ENCODE measurements at regions of chr2 and their contacts with region 1.

Region 1: DNA sequence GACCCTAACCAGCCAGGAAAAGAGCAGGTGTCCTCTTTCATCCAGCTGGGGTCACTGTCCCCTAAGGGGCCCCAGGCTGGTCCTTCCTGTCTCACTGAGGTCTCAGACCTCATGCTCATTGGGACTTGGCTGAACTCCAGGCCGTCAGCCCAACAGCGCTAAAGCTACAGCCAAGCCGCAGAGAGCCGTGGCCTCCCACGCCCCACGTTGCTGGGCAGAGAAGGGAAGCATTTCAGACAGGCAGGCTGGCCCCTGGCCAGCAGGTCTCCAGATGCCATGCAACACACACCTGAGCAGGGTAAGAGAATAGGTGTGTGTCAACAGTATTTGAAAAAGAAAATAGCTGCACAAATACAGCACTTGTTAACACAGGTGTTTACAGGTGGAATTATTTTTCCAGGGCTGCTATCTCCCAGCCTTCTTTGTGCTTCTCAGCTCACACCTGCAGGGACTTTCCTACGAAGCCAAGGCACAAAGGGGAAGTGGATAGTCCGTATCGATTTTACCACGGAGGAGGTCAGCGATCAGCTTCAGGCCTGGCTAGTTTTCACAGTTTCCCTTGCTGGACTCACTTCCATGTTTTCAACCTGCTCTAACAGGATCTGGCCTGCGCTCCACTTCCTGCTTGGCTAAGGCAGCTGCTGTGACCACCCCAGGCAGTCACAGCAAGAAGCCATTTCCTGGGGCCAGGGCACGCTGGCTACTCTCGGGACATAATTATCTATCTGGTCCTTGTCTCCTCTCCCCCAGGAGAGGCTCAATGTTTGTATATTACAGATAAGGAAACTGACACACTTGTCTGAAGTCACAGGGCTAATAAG is 156.1 kb upstream of the ID2 start:
- DNase-seq: peak; percentile 90
- ATAC-seq: peak; percentile 82
- H3K4me3 ChIP-seq: 0 out of 2 replicates have a peak overlapping the region, but pooled peaks have one; percentile 9
- H3K27ac ChIP-seq: peak overlapping the region; percentile 74
- H3K4me1 ChIP-seq: peaks cover 64% of the 10 kb centered on the region
- H3K27me3 ChIP-seq: no peaks in the 10 kb centered on the region
- CTCF ChIP-seq: peak; percentile 54 to 72 (median 58)
- EP300 ChIP-seq: peak in 1 of 2 experiments; percentile 80; a peak in 3 of 4 replicates
- POLR2A ChIP-seq: no peak
- RAD21 ChIP-seq: peak; percentile 88

Region 2: DNA sequence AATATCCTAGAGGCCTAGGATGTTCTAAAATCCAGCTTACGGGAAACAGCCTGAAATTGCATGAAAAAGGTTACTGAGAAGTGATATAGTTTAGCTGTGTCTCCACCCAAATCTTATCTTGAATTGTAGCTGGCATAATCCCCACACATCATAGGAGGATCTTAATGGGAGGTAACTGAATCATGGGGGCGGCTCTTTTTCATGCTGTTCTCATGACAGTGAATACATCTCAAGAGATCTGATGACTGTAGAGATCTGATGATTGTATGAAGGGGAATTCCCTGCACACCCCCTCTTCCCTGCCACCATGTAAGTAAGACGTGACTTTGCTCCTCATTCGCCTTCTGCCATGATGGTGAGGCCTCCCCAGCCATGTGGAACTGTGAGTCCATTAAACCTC is 229.5 kb before region 1 on chr2:
- CTCF ChIA-PET with region 1: no interaction called
- POLR2A ChIA-PET with region 1: no interaction called
- RAD21 ChIA-PET with region 1: no interaction called
- SMC1A ChIA-PET with region 1: no interaction called
- in situ Hi-C with region 1: no loop called
- intact Hi-C with region 1: no loop called
- DNase-seq: no peak
- ATAC-seq: no peak
- H3K4me3 ChIP-seq: no peak overlapping the region
- H3K27ac ChIP-seq: no peak overlapping the region
- H3K4me1 ChIP-seq: peaks cover 16% of the 10 kb centered on the region
- H3K27me3 ChIP-seq: no peaks in the 10 kb centered on the region
- CTCF ChIP-seq: no peak
- EP300 ChIP-seq: no peak
- POLR2A ChIP-seq: no peak
- RAD21 ChIP-seq: no peak

Region 3: DNA sequence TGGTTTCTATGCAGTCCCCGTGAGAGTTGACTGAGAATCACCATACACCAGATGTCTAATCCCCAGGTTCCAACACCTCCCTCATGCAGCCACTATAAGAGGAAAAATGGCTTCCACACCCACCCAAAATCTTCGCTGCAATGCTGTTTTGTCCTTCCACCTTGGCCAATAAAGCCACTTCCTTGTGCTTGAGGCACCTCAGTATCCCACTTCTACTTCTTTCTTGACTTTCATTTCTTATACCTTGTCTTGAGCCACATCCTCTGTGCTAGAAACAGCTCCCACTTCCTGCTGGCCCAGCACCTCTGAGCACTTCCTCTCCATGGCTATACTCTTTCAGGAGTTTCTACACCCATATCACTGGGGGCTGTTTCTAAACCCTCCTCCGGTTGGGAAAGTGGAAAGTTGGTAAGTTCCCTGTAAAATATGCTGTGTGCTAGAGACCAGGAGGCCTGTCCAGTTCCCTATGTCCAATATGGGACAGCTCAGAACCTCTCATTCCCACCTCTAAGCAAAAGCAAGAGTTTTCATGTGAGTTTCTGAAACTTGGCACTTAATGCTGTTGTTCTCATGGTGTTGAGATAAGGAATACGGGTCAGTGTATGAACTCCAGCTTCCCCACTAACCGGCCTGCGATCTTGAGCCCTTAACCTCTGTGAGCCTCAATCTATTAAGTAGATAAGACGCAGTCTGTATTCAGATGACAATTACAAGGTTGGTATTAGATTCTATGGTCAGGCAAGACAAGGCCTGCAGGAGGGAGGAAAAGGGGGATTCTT is 53.1 kb before region 1 on chr2:
- CTCF ChIA-PET with region 1: interaction called, 7 read pairs
- POLR2A ChIA-PET with region 1: interaction called, 73 read pairs
- RAD21 ChIA-PET with region 1: interaction called, 49 read pairs
- SMC1A ChIA-PET with region 1: interaction called, 34 read pairs
- in situ Hi-C with region 1: no loop called
- intact Hi-C with region 1: no loop called
- DNase-seq: no peak
- ATAC-seq: peak; percentile 20
- H3K4me3 ChIP-seq: no peak overlapping the region
- H3K27ac ChIP-seq: peak overlapping the region; percentile 33
- H3K4me1 ChIP-seq: peaks cover 59% of the 10 kb centered on the region
- H3K27me3 ChIP-seq: no peaks in the 10 kb centered on the region
- CTCF ChIP-seq: no peak
- EP300 ChIP-seq: peak; percentile 10 to 24; a peak in 1 of 4 replicates
- POLR2A ChIP-seq: no peak
- RAD21 ChIP-seq: no peak

Region 4: GRCh38 chr2:8514796-8515758 is 10.7 kb before region 1 on chr2:
- CTCF ChIA-PET with region 1: interaction called, 7 read pairs
- POLR2A ChIA-PET with region 1: interaction called, 26 read pairs
- RAD21 ChIA-PET with region 1: interaction called, 18 read pairs
- SMC1A ChIA-PET with region 1: interaction called, 34 read pairs
- in situ Hi-C with region 1: no loop called
- intact Hi-C with region 1: no loop called
- DNase-seq: peak; percentile 99
- ATAC-seq: peak; percentile 82
- H3K4me3 ChIP-seq: peak overlapping the region; percentile 51; the same call in 1 of the 2 replicates
- H3K27ac ChIP-seq: peak overlapping the region; percentile 93
- H3K4me1 ChIP-seq: peaks cover 46% of the 10 kb centered on the region
- H3K27me3 ChIP-seq: no peaks in the 10 kb centered on the region
- CTCF ChIP-seq: no peak
- EP300 ChIP-seq: peak; percentile 76 to 95; a peak in 3 of 4 replicates
- POLR2A ChIP-seq: no peak
- RAD21 ChIP-seq: peak; percentile 36; the same call in 1 of the 2 replicates

Region 5: GRCh38 chr2:8574144-8575037 is 48.6 kb after region 1 on chr2:
- CTCF ChIA-PET with region 1: interaction called, 5 read pairs
- POLR2A ChIA-PET with region 1: interaction called, 9 read pairs
- RAD21 ChIA-PET with region 1: interaction called, 25 read pairs
- SMC1A ChIA-PET with region 1: interaction called, 21 read pairs
- in situ Hi-C with region 1: no loop called
- intact Hi-C with region 1: loop called (anchors 5 kb)
- DNase-seq: no peak
- ATAC-seq: peak; percentile 77
- H3K4me3 ChIP-seq: peak overlapping the region; percentile 52; the same call in 1 of the 2 replicates
- H3K27ac ChIP-seq: peak overlapping the region; percentile 51
- H3K4me1 ChIP-seq: peaks cover 46% of the 10 kb centered on the region
- H3K27me3 ChIP-seq: no peaks in the 10 kb centered on the region
- CTCF ChIP-seq: 0 out of 6 replicates have a peak, but pooled peaks of 1 of the 3 experiments have one; percentile 9
- EP300 ChIP-seq: no peak
- POLR2A ChIP-seq: no peak
- RAD21 ChIP-seq: 0 out of 2 replicates have a peak, but pooled peaks have one; percentile 12

Region 6: DNA sequence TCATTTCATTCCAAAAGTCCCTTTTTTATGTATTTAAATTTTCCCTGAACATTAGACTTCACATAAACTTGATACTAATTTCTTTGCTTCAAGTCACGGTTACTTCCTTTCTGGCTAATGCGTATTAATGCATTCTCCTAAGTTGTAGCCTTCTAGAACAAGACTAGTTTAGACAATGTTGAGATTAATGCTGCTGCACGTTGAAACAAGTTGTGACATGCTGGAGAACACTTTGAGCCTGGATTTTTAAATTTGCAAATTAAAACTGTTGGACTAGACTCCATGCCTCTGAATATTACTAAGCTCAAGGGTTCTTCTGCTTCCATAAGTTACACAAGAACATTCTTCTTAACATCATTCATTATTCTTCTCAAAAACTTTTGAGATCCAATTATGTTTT is 185.2 kb after region 1 on chr2:
- CTCF ChIA-PET with region 1: no interaction called
- POLR2A ChIA-PET with region 1: no interaction called
- RAD21 ChIA-PET with region 1: no interaction called
- SMC1A ChIA-PET with region 1: no interaction called
- in situ Hi-C with region 1: no loop called
- intact Hi-C with region 1: no loop called
- DNase-seq: no peak
- ATAC-seq: no peak
- H3K4me3 ChIP-seq: no peak overlapping the region
- H3K27ac ChIP-seq: no peak overlapping the region
- H3K4me1 ChIP-seq: no peaks in the 10 kb centered on the region
- H3K27me3 ChIP-seq: no peaks in the 10 kb centered on the region
- CTCF ChIP-seq: no peak
- EP300 ChIP-seq: no peak
- POLR2A ChIP-seq: no peak
- RAD21 ChIP-seq: no peak

Region 7: GRCh38 chr2:8761529-8762164 is 235.9 kb after region 1 on chr2:
- CTCF ChIA-PET with region 1: interaction called, 3 read pairs
- POLR2A ChIA-PET with region 1: no interaction called
- RAD21 ChIA-PET with region 1: interaction called, 4 read pairs
- SMC1A ChIA-PET with region 1: interaction called, 4 read pairs
- in situ Hi-C with region 1: no loop called
- intact Hi-C with region 1: loop called (anchors 5 kb)
- DNase-seq: peak; percentile 35
- ATAC-seq: peak; percentile 65
- H3K4me3 ChIP-seq: no peak overlapping the region
- H3K27ac ChIP-seq: no peak overlapping the region
- H3K4me1 ChIP-seq: no peaks in the 10 kb centered on the region
- H3K27me3 ChIP-seq: no peaks in the 10 kb centered on the region
- CTCF ChIP-seq: peak; percentile 49 to 65 (median 56)
- EP300 ChIP-seq: no peak
- POLR2A ChIP-seq: no peak
- RAD21 ChIP-seq: peak; percentile 67

Region 8: GRCh38 chr2:8851811-8852560 is 326.2 kb after region 1 on chr2:
- CTCF ChIA-PET with region 1: no interaction called
- POLR2A ChIA-PET with region 1: no interaction called
- RAD21 ChIA-PET with region 1: no interaction called
- SMC1A ChIA-PET with region 1: no interaction called
- in situ Hi-C with region 1: no loop called
- intact Hi-C with region 1: no loop called
- DNase-seq: no peak
- ATAC-seq: no peak
- H3K4me3 ChIP-seq: no peak overlapping the region
- H3K27ac ChIP-seq: no peak overlapping the region
- H3K4me1 ChIP-seq: no peaks in the 10 kb centered on the region
- H3K27me3 ChIP-seq: no peaks in the 10 kb centered on the region
- CTCF ChIP-seq: no peak
- EP300 ChIP-seq: no peak
- POLR2A ChIP-seq: no peak
- RAD21 ChIP-seq: no peak